HEK293T (cell line): ENCODE measurements at regions of chrX and their contacts with region 1.

Region 1: DNA sequence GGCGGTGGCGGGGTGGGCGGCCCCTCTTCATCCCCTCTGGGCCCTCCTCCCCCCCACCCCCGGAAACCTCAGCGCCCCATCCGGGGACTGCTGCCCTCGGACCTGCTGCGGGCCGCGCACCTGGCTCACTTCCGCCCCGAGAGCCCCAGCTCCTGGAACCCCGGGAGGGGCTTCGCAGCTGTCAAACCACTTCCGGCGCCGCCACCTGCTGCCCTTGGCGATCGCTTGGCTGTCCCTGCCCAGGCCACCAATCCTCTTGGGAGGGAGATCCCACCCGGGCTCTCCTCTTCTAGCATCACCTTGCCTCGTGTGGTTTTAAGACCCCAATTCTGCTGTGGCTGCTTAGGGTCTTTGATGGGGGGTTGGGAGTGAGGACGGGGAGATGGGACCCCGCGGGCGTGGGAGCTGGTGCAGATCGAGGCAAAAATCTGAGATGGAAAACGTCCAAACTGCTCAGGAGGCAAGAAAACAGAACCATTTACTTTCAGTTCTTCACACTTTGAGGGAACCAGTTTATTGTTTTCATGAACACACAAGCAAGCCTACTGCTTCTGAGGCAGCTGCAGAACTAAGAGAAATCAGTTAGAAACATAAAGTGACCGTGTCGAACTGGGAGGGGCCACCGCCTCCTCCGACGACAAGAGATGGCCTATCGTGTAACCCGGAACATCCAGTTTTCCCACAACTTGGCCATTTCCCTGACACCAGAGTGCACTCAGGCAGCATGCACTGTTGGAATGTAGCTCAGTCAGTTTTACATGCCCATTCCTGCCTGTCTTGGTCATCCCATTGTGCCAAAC is 779 bp downstream of the MTMR1 start:
- DNase-seq: peak; percentile 73

Region 2: DNA sequence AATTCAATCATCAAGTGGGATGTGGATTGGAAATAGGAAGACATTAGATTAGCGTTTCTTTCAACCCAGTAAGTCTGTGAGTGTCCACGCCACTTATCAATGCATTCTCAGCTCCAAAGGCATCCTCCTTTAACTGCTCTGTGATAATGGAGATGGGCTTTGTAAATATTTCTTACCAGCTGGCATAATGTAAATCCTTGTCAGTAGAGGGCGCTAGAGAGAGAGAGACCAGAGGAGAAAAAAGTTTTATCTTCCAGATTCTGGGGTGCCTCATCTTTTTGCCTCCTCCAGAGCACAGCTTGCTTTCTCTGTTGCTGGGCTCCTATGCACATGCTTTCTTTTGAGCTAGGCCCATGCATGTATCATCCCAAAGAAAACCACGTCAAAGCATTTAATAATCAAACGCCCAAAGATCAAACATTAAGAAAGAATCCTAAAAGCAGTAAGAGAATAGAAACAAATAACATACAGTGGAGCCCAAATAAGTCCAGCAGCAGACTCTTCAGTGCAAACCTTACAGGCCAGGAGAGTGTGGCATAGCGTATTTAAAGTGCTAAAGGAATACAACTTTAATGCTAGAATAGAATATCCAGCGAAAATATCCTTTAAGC is 10.3 kb before region 1 on chrX:
- CTCF ChIA-PET with region 1: interaction called, 13 read pairs
- POLR2A ChIA-PET with region 1: no interaction called
- DNase-seq: peak; percentile 55